Stomach (tissue), 19 donors: ENCODE measurements at regions of chr17 and their contacts with region 1.

Region 1: DNA sequence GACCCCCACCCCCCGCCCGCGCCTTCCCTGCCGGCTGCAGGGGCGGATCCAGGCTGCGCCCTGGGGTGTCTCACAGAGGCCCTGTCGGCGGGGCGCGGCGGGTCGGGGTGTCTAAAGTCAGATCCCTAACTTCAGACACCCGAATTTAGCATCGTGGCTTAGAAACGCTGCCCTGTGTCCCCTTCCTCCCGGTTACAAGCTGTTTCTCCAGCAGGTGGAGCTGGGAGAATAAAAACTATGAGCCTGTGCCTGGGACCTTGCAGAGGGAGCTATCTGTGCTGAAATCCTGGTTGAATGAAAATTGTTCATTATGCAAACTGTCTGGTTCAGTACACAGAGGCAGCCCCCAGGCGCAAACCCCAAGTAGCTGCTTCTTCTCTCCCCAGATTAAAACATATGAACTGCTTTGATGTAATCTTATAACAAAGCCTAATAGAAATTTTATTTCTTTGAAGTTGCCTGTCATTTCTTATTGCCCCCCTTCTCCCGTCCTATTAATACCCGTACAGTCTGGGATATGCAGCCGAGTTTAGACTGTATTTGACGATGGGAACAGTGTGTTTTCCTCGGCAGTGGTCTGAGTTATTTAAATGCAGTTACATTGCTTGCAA is 79.0 kb downstream of the RPA1 start:
- DNase-seq: peak; percentile 65 to 90
- H3K4me3 ChIP-seq: peak overlapping the region; percentile 7 to 40 (median 22)
- H3K27ac ChIP-seq: no peak overlapping the region
- H3K4me1 ChIP-seq: peaks cover 9 to 17% (median 12%) of the 10 kb centered on the region in 4 donors
- H3K27me3 ChIP-seq: peaks cover 4 to 92% (median 64%) of the 10 kb centered on the region in 3 donors
- CTCF ChIP-seq: peak in 5 of 7 experiments; percentile 46 to 70 (median 53)
- EP300 ChIP-seq: no peak
- POLR2A ChIP-seq: no peak

Region 2: GRCh38 chr17:1793447-1793806 is 115.4 kb before region 1 on chr17:
- intact Hi-C with region 1: no loop called
- DNase-seq: no peak
- H3K4me3 ChIP-seq: no peak overlapping the region
- H3K27ac ChIP-seq: no peak overlapping the region
- H3K4me1 ChIP-seq: peaks cover 0 to 16% (median 6%) of the 10 kb centered on the region in 4 donors
- H3K27me3 ChIP-seq: no peaks in the 10 kb centered on the region
- CTCF ChIP-seq: no peak
- EP300 ChIP-seq: no peak
- POLR2A ChIP-seq: no peak

Region 3: DNA sequence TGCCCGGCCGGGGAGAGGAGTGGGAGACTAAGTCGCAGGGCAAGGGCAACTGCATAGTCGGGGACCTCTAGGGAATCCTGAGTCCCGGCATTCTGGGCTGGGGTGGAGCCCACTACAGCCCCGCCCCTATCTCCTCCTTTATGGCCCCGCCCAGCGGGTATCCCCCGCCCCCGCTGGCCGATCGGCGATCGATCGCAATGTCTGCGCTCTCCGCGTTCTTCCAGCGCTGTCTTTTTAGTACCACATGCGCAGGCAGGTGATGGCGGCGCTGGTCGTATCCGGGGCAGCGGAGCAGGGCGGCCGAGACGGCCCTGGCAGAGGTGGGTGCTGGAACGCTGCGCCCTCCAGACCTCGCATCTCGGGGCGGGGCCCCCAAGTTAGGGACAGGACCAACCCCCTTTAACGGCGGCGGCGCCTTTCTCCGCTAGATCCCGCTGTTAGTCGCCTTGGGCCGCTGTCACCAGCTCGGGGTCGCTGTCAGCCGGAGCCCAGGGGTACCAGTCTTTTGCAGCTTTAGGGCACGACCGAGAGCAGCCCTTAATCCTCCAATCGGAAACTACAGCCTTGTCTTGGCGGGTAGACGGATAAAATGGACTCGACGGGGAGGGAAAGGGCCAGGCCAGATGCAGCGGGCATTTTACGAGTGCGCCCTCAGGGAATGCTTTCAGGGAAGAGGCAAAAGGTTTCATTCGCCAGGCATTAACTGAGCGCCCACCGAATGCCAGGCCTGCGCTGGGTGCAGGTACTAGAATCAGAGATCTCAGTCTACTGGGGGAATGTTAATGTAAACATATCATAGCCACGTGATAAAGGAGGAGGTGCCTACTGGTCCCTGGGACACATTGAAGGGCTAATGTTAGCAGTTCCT is 121.3 kb after region 1 on chr17 and contains the start of gene DPH1:
- intact Hi-C with region 1: loop called (anchors 5 kb)
- DNase-seq: peak; percentile 88 to 95
- H3K4me3 ChIP-seq: peak within 1 kb of the TSS; percentile 94 to 100 (median 100)
- H3K27ac ChIP-seq: peak within 1 kb of the TSS; percentile 32 to 83 (median 79)
- H3K4me1 ChIP-seq: peaks cover 27 to 56% (median 49%) of the 10 kb centered on the region in 4 donors
- H3K27me3 ChIP-seq: peaks cover 0 to 45% (median 24%) of the 10 kb centered on the region in 3 donors
- CTCF ChIP-seq: peak in 1 of 7 experiments; percentile 18
- EP300 ChIP-seq: no peak
- POLR2A ChIP-seq: no peak
- total RNA-seq, gene DPH1: 26.1 to 188 (median 95.0) TPM